Panc1 (cell line): ENCODE measurements at regions of chr3 and their contacts with region 1.

Region 1: DNA sequence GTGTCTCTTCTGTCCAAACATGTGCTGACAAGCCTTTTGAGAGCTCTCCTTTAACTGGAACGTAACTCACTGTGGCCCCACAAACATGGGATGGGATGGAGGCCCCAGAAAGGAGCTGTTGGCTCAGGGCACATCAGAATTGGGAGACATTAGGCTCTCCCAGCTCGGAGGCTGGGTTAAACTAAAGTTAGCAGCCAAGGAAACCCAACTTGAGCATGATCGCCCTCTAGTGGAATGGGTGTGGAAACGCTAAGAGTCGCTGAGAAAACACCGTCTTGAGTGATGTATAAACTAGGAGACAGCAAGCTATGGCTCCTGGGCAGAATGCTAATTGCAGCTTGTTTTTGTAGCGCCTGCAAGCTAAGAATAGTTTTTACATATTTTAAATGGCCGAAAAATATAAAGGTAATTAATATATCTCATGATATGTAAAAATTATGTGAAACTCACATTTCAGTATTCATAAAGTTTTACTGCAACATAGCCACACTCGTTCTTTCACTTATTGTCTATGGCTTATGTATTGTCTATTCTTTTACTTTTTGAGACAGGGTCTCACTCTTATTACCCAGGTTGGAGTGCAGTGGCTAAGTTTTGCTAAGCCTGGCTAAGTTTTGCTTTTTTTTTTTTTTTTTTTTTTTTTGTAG is 138.8 kb upstream of the HACD2 start:
- DNase-seq: peak; percentile 76
- ATAC-seq: peak; percentile 77
- H3K4me3 ChIP-seq: no peak overlapping the region
- H3K27ac ChIP-seq: no peak overlapping the region
- H3K4me1 ChIP-seq: no peaks in the 10 kb centered on the region
- H3K27me3 ChIP-seq: no peaks in the 10 kb centered on the region; the same call in 1 of the 2 replicates
- CTCF ChIP-seq: peak; percentile 94

Region 2: DNA sequence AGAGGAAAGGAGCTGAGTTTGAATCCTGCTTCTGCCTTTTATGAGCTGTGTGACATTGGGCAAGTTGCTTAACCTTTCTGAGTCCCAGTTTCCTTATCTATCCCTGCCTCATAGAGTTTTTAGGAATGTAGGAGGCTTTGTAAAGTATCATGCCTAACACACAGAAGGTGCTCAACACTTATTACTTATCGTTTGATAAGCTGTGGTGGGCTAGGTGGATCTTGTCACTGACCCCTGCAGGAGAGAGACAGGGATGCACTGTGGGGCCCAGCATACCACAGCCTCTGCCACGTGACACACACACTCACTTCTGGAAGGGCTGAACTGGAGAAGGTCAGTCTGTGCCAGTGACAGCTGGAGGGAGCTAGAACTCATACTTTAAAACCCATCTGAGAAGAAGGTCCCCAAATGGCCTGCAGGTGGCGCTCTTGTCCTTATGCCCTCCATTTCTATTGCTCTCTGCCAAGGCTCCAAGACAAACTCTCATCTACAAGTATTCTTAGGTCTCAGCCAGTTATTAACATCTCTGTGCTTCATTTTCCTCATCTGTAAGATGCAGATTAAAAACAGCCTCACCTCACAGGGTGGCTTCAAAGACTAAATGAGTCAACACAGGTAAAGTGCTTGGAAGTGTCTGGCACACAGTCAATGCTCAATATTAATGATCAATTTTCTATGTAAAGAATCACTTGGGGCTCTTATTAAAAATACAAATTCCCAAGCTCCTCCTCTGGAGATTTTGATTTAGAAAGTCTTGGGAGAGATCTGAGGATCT is 81.3 kb before region 1 on chr3:
- CTCF ChIA-PET with region 1: interaction called, 17 read pairs
- POLR2A ChIA-PET with region 1: no interaction called
- in situ Hi-C with region 1: no loop called
- intact Hi-C with region 1: no loop called
- DNase-seq: peak; percentile 77
- ATAC-seq: peak; percentile 90
- H3K4me3 ChIP-seq: no peak overlapping the region
- H3K27ac ChIP-seq: no peak overlapping the region
- H3K4me1 ChIP-seq: no peaks in the 10 kb centered on the region
- H3K27me3 ChIP-seq: no peaks in the 10 kb centered on the region
- CTCF ChIP-seq: peak; percentile 95

Region 3: DNA sequence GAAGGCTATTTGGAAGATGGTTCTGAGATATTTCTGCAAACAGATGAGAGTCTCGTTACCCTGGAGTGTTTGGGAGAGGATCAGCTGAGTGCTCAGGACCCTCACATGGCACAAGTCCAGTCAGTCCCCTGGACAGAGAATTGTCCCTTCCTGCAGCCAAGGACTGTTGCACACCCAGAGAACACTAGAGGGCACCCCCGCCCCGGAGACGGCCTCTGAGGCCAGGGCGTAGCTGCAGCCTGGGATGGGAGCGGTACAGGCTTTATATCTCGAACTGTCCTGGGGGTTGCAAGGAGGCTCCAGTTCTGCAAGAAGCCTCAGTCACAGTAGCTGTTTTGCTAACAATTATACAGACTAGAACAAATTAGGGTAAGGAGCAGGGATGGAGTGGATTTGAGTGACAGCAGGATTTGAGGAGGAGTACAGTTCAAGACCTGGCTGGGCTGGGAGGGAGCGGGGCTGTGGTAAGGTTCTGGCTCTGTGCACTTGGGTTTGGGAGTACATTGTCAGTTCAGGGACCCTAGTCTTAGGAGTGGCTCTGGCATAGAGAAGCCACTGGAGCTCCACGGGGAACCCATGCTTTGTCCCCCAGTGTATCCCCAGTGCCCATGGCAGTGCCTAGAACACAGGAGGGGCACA is 71.2 kb before region 1 on chr3:
- CTCF ChIA-PET with region 1: interaction called, 15 read pairs
- POLR2A ChIA-PET with region 1: no interaction called
- in situ Hi-C with region 1: no loop called
- intact Hi-C with region 1: loop called (anchors 2 kb)
- DNase-seq: peak; percentile 43
- ATAC-seq: peak; percentile 96
- H3K4me3 ChIP-seq: no peak overlapping the region
- H3K27ac ChIP-seq: no peak overlapping the region
- H3K4me1 ChIP-seq: no peaks in the 10 kb centered on the region
- H3K27me3 ChIP-seq: no peaks in the 10 kb centered on the region
- CTCF ChIP-seq: peak; percentile 98

Region 4: GRCh38 chr3:123739754-123740153 is 16.1 kb after region 1 on chr3:
- CTCF ChIA-PET with region 1: interaction called, 14 read pairs
- POLR2A ChIA-PET with region 1: no interaction called
- in situ Hi-C with region 1: no loop called
- intact Hi-C with region 1: no loop called
- DNase-seq: no peak
- ATAC-seq: peak; percentile 44
- H3K4me3 ChIP-seq: no peak overlapping the region
- H3K27ac ChIP-seq: no peak overlapping the region
- H3K4me1 ChIP-seq: no peaks in the 10 kb centered on the region
- H3K27me3 ChIP-seq: no peaks in the 10 kb centered on the region
- CTCF ChIP-seq: no peak

Region 5: GRCh38 chr3:123986427-123986826 is 262.8 kb after region 1 on chr3:
- CTCF ChIA-PET with region 1: no interaction called
- POLR2A ChIA-PET with region 1: no interaction called
- in situ Hi-C with region 1: no loop called
- intact Hi-C with region 1: loop called (anchors 10 kb)
- DNase-seq: no peak
- ATAC-seq: no peak
- H3K4me3 ChIP-seq: no peak overlapping the region
- H3K27ac ChIP-seq: no peak overlapping the region
- H3K4me1 ChIP-seq: no peaks in the 10 kb centered on the region
- H3K27me3 ChIP-seq: peaks cover 61% of the 10 kb centered on the region
- CTCF ChIP-seq: no peak

Region 6: GRCh38 chr3:124325248-124325647 is 601.6 kb after region 1 on chr3:
- CTCF ChIA-PET with region 1: interaction called, 12 read pairs
- POLR2A ChIA-PET with region 1: no interaction called
- in situ Hi-C with region 1: no loop called
- intact Hi-C with region 1: no loop called
- DNase-seq: no peak
- ATAC-seq: no peak
- H3K4me3 ChIP-seq: no peak overlapping the region
- H3K27ac ChIP-seq: no peak overlapping the region
- H3K4me1 ChIP-seq: no peaks in the 10 kb centered on the region
- H3K27me3 ChIP-seq: peaks cover 34% of the 10 kb centered on the region
- CTCF ChIP-seq: no peak